Mammary epithelial cell (primary cell): ENCODE measurements at regions of chr7 and their contacts with region 1.

Region 1: GRCh38 chr7:74312418-74313021 is 23.3 kb downstream of the CLIP2 start:
- DNase-seq: peak; percentile 96
- H3K4me3 ChIP-seq: peak overlapping the region; percentile 10 to 27 (median 18)
- H3K27ac ChIP-seq: peak overlapping the region; percentile 89
- H3K4me1 ChIP-seq: peaks cover 39% of the 10 kb centered on the region
- H3K27me3 ChIP-seq: no peaks in the 10 kb centered on the region
- CTCF ChIP-seq: no peak

Region 2: DNA sequence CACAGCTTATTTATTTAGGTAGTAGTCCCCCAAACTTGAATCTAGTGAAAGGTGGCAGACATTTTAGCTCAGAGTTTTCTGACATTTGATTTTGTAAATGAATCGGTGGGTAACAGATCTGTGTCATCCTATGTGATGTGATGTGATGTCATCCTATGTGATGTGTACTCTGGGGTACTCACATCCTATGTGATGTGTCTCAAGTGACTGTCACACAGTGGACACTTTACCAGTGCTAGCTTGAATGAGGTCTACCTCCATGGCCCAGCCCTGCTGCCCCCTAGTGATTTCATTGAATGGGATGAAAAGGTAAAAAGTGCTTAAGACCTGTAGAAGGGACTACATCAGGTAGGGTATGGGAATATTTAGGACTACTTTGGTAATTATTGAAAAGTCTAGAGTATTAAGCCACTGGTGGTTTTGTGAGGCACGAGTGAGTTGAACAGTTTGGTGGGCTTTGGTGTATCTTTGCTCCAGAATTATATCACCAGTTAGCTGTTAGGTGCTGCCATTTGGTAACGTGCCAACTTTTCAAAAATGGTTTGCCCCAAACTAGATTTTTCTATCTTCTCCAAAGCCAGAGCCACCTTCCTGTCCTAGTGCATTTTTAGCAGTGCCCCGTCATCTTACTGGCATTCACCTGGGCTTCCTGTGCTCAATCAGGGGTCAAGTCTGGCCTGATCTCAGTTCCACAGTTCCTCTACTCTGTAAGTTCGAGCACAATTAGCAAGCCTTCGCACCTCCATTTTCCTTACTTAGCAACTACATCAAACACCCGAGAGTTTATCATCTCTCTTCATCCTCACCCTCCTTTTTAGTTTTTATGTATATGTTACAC is 128.7 kb before region 1 on chr7:
- CTCF ChIA-PET with region 1: no interaction called
- dilution Hi-C with region 1: loop called (anchors 5 kb)
- in situ Hi-C with region 1: no loop called
- intact Hi-C with region 1: no loop called
- DNase-seq: no peak
- H3K4me3 ChIP-seq: no peak overlapping the region
- H3K27ac ChIP-seq: peak overlapping the region; percentile 22
- H3K4me1 ChIP-seq: peaks cover 58% of the 10 kb centered on the region
- H3K27me3 ChIP-seq: no peaks in the 10 kb centered on the region
- CTCF ChIP-seq: peak in 1 of 2 donors; percentile 55

Region 3: DNA sequence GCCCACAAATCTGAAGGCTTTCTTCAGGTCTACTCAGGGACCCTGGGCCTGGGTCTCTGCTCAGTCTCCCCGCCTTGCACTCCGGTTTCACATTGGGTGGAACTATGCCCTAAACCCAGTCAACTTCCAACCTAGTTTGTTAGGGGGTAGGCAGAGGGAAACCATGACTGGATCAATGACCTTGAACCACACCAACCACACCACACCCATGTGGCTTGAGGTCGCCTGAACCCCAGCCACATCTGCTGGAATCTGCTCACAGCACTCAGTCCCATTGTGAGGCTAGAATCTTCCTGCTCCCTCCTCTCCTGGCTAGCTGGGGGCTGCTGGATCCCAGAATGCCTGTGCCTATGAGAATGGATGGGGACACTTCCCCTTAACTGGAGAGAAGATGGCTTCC is 76.2 kb before region 1 on chr7:
- CTCF ChIA-PET with region 1: no interaction called
- dilution Hi-C with region 1: loop called (anchors 5 kb)
- in situ Hi-C with region 1: no loop called
- intact Hi-C with region 1: no loop called
- DNase-seq: no peak
- H3K4me3 ChIP-seq: no peak overlapping the region
- H3K27ac ChIP-seq: no peak overlapping the region
- H3K4me1 ChIP-seq: no peaks in the 10 kb centered on the region
- H3K27me3 ChIP-seq: no peaks in the 10 kb centered on the region
- CTCF ChIP-seq: no peak

Region 4: GRCh38 chr7:74254129-74254857 is 58.2 kb before region 1 on chr7 and contains the start of gene RFC2:
- CTCF ChIA-PET with region 1: no interaction called
- dilution Hi-C with region 1: no loop called
- in situ Hi-C with region 1: no loop called
- intact Hi-C with region 1: loop called (anchors 2 kb)
- DNase-seq: peak; percentile 95
- H3K4me3 ChIP-seq: peak within 1 kb of the TSS; percentile 81 to 97 (median 88)
- H3K27ac ChIP-seq: peak within 1 kb of the TSS; percentile 91
- H3K4me1 ChIP-seq: peaks cover 8% of the 10 kb centered on the region
- H3K27me3 ChIP-seq: no peaks in the 10 kb centered on the region
- CTCF ChIP-seq: no peak
- total RNA-seq, gene RFC2: 15.0 to 43.9 TPM

Region 5: GRCh38 chr7:74289018-74289658 is 23.4 kb before region 1 on chr7 and contains the start of gene CLIP2:
- CTCF ChIA-PET with region 1: no interaction called
- dilution Hi-C with region 1: no loop called
- in situ Hi-C with region 1: no loop called
- intact Hi-C with region 1: no loop called
- DNase-seq: peak; percentile 76
- H3K4me3 ChIP-seq: peak within 1 kb of the TSS; percentile 57 to 92 (median 63)
- H3K27ac ChIP-seq: peak within 1 kb of the TSS; percentile 26
- H3K4me1 ChIP-seq: peaks cover 24% of the 10 kb centered on the region
- H3K27me3 ChIP-seq: no peaks in the 10 kb centered on the region
- CTCF ChIP-seq: no peak
- total RNA-seq, gene CLIP2: 34.3 to 37.9 TPM

Region 6: GRCh38 chr7:74334030-74334429 is 21.5 kb after region 1 on chr7:
- CTCF ChIA-PET with region 1: no interaction called
- dilution Hi-C with region 1: no loop called
- in situ Hi-C with region 1: no loop called
- intact Hi-C with region 1: no loop called
- DNase-seq: peak; percentile 72
- H3K4me3 ChIP-seq: no peak overlapping the region
- H3K27ac ChIP-seq: no peak overlapping the region
- H3K4me1 ChIP-seq: peaks cover 6% of the 10 kb centered on the region
- H3K27me3 ChIP-seq: no peaks in the 10 kb centered on the region
- CTCF ChIP-seq: no peak

Region 7: GRCh38 chr7:74355091-74355490 is 42.6 kb after region 1 on chr7:
- CTCF ChIA-PET with region 1: no interaction called
- dilution Hi-C with region 1: loop called (anchors 5 kb)
- in situ Hi-C with region 1: no loop called
- intact Hi-C with region 1: no loop called
- DNase-seq: peak; percentile 81
- H3K4me3 ChIP-seq: no peak overlapping the region
- H3K27ac ChIP-seq: no peak overlapping the region
- H3K4me1 ChIP-seq: peaks cover 4% of the 10 kb centered on the region
- H3K27me3 ChIP-seq: no peaks in the 10 kb centered on the region
- CTCF ChIP-seq: no peak

Region 8: GRCh38 chr7:74379938-74380337 is 67.4 kb after region 1 on chr7:
- CTCF ChIA-PET with region 1: no interaction called
- dilution Hi-C with region 1: loop called (anchors 5 kb)
- in situ Hi-C with region 1: no loop called
- intact Hi-C with region 1: no loop called
- DNase-seq: no peak
- H3K4me3 ChIP-seq: no peak overlapping the region
- H3K27ac ChIP-seq: no peak overlapping the region
- H3K4me1 ChIP-seq: no peaks in the 10 kb centered on the region
- H3K27me3 ChIP-seq: no peaks in the 10 kb centered on the region
- CTCF ChIP-seq: no peak

Region 9: DNA sequence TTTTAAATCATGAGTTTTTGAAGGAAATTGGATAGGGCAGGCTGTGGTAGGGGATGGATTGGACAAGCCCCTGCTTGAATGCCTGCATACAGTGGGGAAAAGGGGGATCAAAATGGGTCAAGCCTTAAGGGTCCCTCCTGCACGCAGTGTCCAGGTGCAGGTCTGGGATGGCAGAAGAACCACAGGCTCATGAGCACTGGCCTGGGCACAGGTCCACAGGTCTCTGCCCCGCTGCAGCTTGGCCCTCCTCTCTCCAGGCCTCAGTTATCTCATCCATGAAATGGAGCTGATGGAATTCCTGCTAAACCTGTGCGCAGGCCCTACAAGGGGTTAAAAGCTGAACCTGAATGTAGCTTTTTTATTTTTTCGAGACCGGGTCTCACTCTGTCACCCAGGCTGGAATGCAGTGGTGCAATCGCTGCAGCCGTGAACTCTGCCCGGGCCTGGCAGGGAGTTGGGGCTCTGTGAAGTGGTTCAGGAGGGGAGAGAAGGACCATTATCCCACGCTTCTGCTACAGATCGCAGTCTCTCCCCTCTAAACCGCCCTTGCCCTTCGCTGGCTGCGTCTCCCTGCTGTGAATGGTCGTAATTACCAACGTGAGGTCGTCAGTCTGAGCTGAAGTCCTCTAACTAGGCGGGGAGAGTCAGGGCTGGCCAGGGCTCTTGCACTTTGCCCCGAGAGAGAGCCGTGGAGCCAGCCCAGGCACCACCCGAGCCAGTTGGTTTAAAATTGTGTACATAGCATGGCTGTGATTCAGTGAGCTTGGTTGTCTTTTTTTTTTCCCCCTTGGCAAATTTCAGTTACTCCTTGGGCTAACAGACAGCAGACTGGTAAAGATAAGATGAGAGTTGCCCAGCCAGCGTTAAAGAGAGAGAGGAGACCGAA is 267.5 kb after region 1 on chr7:
- CTCF ChIA-PET with region 1: no interaction called
- dilution Hi-C with region 1: loop called (anchors 5 kb)
- in situ Hi-C with region 1: no loop called
- intact Hi-C with region 1: no loop called
- DNase-seq: peak; percentile 45
- H3K4me3 ChIP-seq: no peak overlapping the region
- H3K27ac ChIP-seq: no peak overlapping the region
- H3K4me1 ChIP-seq: peaks cover 49% of the 10 kb centered on the region
- H3K27me3 ChIP-seq: no peaks in the 10 kb centered on the region
- CTCF ChIP-seq: no peak